Mammary epithelial cell (primary cell): ENCODE measurements at regions of chrX and their contacts with region 1.

Region 1: GRCh38 chrX:136268051-136269048 is 17.1 kb upstream of the MAP7D3 start:
- DNase-seq: no peak
- H3K4me3 ChIP-seq: no peak overlapping the region
- H3K27ac ChIP-seq: no peak overlapping the region
- H3K4me1 ChIP-seq: peaks cover 7% of the 10 kb centered on the region
- H3K27me3 ChIP-seq: no peaks in the 10 kb centered on the region
- CTCF ChIP-seq: peak; percentile 71 to 84

Region 2: GRCh38 chrX:135697601-135698000 is 570.7 kb before region 1 on chrX:
- CTCF ChIA-PET with region 1: no interaction called
- dilution Hi-C with region 1: no loop called
- in situ Hi-C with region 1: no loop called
- intact Hi-C with region 1: no loop called
- DNase-seq: no peak
- H3K4me3 ChIP-seq: no peak overlapping the region
- H3K27ac ChIP-seq: no peak overlapping the region
- H3K4me1 ChIP-seq: no peaks in the 10 kb centered on the region
- H3K27me3 ChIP-seq: no peaks in the 10 kb centered on the region
- CTCF ChIP-seq: no peak

Region 3: DNA sequence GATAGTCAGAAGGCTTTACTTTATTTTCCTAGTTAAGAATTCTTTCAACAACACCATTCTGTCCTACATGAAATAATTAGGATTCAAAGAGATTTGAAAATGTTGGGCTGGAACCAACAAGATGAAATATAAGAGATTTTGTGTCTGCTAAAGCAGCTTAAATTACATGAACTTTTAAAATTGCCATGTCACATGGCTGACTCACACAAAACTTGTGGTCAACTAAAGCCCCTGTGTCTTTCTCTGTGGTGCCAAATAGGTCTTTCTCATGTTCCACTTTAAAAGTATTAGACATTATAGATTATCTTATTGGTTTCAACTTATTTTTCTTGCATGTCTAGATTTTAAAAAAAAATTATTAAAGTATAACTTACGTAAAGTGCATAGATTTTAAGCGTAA is 181.8 kb before region 1 on chrX:
- CTCF ChIA-PET with region 1: no interaction called
- dilution Hi-C with region 1: no loop called
- in situ Hi-C with region 1: no loop called
- intact Hi-C with region 1: no loop called
- DNase-seq: no peak
- H3K4me3 ChIP-seq: no peak overlapping the region
- H3K27ac ChIP-seq: no peak overlapping the region
- H3K4me1 ChIP-seq: no peaks in the 10 kb centered on the region
- H3K27me3 ChIP-seq: no peaks in the 10 kb centered on the region
- CTCF ChIP-seq: no peak

Region 4: DNA sequence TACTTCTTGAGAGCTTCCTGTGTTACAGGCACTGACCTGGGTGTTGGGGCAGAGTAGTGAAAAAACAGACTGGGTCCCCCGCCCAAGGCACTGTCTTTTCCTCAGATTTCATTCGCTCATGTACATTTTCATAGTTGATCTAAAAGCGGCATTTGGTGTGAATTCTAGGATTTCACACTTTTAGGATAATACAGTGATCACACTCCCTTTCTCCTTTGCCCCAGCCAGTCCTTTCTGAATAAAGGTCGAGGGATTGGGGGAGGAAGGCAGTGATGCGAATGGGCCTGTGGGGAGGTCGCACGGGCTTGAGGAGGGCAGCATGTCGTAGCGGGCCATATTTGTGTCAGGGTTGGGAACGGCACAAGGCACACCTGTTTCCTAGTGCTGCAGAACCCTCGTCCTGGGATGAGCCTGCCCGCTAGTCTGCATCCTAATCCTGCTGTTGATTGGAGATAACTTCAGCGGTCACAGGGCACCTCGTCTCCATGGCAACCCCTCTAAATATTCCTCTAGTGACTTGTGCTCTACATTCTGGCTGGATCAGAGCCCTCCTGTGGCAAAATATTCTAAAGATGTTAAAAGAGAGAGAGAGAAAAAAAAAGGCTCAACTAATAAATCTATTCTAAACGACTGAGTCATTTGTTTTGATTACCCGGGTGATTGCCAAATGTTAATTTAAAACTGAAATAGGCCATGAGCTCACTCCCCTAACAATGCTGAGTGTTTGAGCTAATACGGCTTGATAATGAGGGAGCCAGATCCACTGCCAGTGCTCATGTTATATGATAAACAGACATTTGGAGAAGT is 99.2 kb before region 1 on chrX:
- CTCF ChIA-PET with region 1: no interaction called
- dilution Hi-C with region 1: no loop called
- in situ Hi-C with region 1: no loop called
- intact Hi-C with region 1: loop called (anchors 1 kb)
- DNase-seq: peak; percentile 18
- H3K4me3 ChIP-seq: no peak overlapping the region
- H3K27ac ChIP-seq: no peak overlapping the region
- H3K4me1 ChIP-seq: no peaks in the 10 kb centered on the region
- H3K27me3 ChIP-seq: no peaks in the 10 kb centered on the region
- CTCF ChIP-seq: no peak

Region 5: GRCh38 chrX:136339702-136340101 is 71.4 kb after region 1 on chrX:
- CTCF ChIA-PET with region 1: no interaction called
- dilution Hi-C with region 1: no loop called
- in situ Hi-C with region 1: no loop called
- intact Hi-C with region 1: no loop called
- DNase-seq: no peak
- H3K4me3 ChIP-seq: no peak overlapping the region
- H3K27ac ChIP-seq: no peak overlapping the region
- H3K4me1 ChIP-seq: peaks cover 6% of the 10 kb centered on the region
- H3K27me3 ChIP-seq: no peaks in the 10 kb centered on the region
- CTCF ChIP-seq: no peak

Region 6: GRCh38 chrX:136353519-136354095 is 85.3 kb after region 1 on chrX:
- CTCF ChIA-PET with region 1: no interaction called
- dilution Hi-C with region 1: no loop called
- in situ Hi-C with region 1: no loop called
- intact Hi-C with region 1: loop called (anchors 5 kb)
- DNase-seq: peak; percentile 93
- H3K4me3 ChIP-seq: no peak overlapping the region
- H3K27ac ChIP-seq: peak overlapping the region; percentile 87
- H3K4me1 ChIP-seq: peaks cover 26% of the 10 kb centered on the region
- H3K27me3 ChIP-seq: no peaks in the 10 kb centered on the region
- CTCF ChIP-seq: no peak

Region 7: DNA sequence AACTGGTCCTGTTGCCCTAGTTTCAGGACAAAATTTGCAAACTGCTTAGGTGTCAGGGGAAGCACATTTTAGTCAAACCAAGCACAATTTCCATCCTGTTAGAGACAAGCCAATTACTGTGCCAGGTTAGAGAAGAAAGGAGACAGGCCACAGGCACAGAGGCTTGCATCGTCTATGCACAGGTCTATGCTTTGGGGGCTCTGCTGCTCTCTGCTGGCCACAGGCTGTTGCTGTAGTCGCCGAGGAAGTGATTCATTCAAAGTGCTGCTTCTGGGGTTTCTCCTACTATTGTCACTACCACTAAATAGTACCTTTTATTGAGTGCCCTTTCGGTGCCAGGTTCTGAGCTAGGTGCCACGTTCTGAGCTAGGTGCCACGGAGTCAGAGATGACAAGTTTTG is 309.2 kb after region 1 on chrX:
- CTCF ChIA-PET with region 1: no interaction called
- dilution Hi-C with region 1: no loop called
- in situ Hi-C with region 1: no loop called
- intact Hi-C with region 1: loop called (anchors 10 kb)
- DNase-seq: peak; percentile 37
- H3K4me3 ChIP-seq: no peak overlapping the region
- H3K27ac ChIP-seq: no peak overlapping the region
- H3K4me1 ChIP-seq: no peaks in the 10 kb centered on the region
- H3K27me3 ChIP-seq: no peaks in the 10 kb centered on the region
- CTCF ChIP-seq: peak; percentile 68 to 79